ENCODE measurements at regions of chr2 and their contacts with region 1.

Region 1: DNA sequence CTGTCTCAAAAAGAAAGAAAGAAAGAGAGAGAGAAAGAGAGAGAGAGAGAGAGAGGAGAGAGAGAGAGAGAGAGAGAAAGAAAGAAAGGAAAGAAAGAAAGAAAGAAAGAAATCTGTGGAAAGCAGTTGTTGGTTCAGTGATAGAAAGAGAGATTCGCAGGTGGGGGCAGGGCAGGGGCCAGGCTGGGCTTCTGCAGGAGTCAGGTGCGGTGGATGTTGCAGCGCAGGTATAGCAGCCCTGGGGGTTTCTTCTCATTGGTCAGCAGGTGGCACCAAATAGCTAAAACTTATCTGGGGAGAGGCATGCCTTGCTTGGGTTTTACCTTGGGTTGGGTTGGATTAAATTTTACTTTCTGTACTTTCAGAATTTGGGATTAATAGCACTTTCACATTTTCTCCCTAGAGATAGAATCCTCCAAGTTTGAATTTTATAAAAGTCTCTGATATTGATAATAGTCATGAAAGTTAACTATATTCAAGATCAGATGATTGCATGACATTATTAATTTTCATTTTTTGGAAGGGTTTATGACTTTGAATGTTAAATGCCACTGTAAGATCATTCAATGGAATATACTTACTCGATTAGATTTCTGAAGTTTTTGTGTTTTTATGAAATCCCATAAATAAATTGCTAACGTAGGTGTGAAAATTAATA is 66.6 kb downstream of the SPTBN1 start:
- DNase-seq: peak in 2 of 5 donors; percentile 45
- ATAC-seq: peak in 2 of 4 donors; percentile 37 to 47
- H3K4me3 ChIP-seq: no peak overlapping the region
- H3K27ac ChIP-seq: peak overlapping the region in 5 of 12 donors; percentile 6 to 82 (median 59)
- H3K4me1 ChIP-seq: peaks cover 8 to 94% (median 87%) of the 10 kb centered on the region in 12 donors
- H3K27me3 ChIP-seq: no peaks in the 10 kb centered on the region
- CTCF ChIP-seq: peak; percentile 42 to 68 (median 59)
- POLR2A ChIP-seq: no peak

Region 2: DNA sequence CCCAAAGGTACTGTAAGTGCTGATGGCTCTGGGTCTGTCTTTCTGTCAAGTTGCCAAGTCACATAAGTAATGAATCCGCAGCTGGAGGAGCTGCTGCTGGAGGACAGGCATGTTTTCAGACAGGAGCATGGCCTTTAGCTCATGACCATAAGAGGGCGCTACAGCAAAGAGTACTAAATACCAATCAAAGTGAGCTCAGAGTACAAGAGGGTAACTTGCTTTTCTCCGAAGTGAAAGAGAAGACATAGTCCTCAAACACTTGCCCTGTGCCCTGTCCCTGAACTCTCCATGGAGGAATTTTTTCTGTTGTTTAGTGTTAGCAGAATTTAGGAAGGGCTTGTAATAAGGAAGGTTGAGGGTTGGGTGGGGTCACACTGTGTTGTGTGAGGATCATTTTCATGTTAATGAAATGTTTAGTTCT is 142.7 kb after region 1 on chr2:
- intact Hi-C with region 1: loop called in 1 of 10 experiments (anchors 10 kb)
- DNase-seq: no peak
- ATAC-seq: peak in 3 of 4 donors; percentile 23 to 34 (median 31)
- H3K4me3 ChIP-seq: no peak overlapping the region
- H3K27ac ChIP-seq: peak overlapping the region; percentile 77 to 96 (median 84)
- H3K4me1 ChIP-seq: peaks cover 20 to 63% (median 48%) of the 10 kb centered on the region in 12 donors
- H3K27me3 ChIP-seq: no peaks in the 10 kb centered on the region
- CTCF ChIP-seq: peak; percentile 35 to 70 (median 60)
- POLR2A ChIP-seq: no peak